Activated naive CD4-positive, alpha-beta T cell treated with anti-CD3 and anti-CD28 coated beads for 36 hours (primary cell): ENCODE measurements at regions of chr2 and their contacts with region 1.

Region 1: GRCh38 chr2:161077367-161078210 is 82.6 kb upstream of the TANK start:
- DNase-seq: peak; percentile 91
- H3K4me3 Mint-ChIP-seq: peak overlapping the region; percentile 34
- H3K27ac Mint-ChIP-seq: peak overlapping the region; percentile 92
- H3K4me1 Mint-ChIP-seq: peaks cover 41% of the 10 kb centered on the region
- H3K27me3 Mint-ChIP-seq: no peaks in the 10 kb centered on the region

Region 2: DNA sequence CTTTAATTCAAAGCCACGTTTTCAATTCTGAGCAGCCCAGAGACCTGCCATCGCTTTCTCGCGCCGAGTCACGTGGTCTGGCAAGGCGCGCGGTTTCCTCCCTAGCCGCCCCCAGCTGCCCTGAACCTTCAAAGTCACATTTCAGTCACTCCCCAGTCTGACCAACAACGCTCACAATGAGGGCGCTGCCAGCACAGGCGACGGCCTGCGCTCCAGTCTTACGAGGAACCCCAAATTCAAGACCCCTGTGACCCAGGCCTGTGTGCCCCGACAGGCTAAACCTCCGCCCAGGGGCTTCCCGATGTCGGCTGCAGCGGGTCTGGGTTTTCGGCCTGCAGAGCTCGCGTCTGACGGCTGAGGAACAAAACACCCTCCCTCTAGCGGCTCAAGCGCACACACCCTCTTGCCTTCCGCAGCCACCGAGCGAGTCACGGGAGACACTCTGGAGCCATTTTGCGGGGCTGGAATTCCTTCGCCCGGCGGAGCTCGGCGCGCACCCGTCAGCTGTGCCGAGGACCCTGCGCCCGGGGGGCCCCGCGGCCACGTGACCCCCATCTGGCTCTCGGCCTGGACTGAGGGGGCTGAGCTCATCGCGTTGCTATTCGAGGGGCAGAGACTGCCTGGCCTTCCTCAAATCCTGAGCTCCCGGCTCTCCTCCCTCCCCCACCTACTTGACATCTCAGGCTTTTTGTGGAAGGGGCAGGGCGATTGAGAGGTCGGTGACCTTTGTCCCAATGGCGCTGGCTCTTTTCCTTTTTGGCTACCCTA is 807.6 kb before region 1 on chr2:
- CTCF ChIA-PET with region 1: no interaction called
- intact Hi-C with region 1: loop called (anchors 1 kb)
- DNase-seq: peak; percentile 64
- H3K4me3 Mint-ChIP-seq: peak overlapping the region; percentile 65
- H3K27ac Mint-ChIP-seq: peak overlapping the region; percentile 53
- H3K4me1 Mint-ChIP-seq: peaks cover 39% of the 10 kb centered on the region
- H3K27me3 Mint-ChIP-seq: no peaks in the 10 kb centered on the region

Region 3: GRCh38 chr2:160493227-160494028 is 584.2 kb before region 1 on chr2 and contains the start of gene RBMS1:
- CTCF ChIA-PET with region 1: no interaction called
- intact Hi-C with region 1: loop called (anchors 1 kb)
- DNase-seq: peak; percentile 58
- H3K4me3 Mint-ChIP-seq: peak within 1 kb of the TSS; percentile 93
- H3K27ac Mint-ChIP-seq: peak within 1 kb of the TSS; percentile 93
- H3K4me1 Mint-ChIP-seq: peaks cover 43% of the 10 kb centered on the region
- H3K27me3 Mint-ChIP-seq: no peaks in the 10 kb centered on the region
- total RNA-seq, gene RBMS1: 27.8 to 29.1 TPM

Region 4: DNA sequence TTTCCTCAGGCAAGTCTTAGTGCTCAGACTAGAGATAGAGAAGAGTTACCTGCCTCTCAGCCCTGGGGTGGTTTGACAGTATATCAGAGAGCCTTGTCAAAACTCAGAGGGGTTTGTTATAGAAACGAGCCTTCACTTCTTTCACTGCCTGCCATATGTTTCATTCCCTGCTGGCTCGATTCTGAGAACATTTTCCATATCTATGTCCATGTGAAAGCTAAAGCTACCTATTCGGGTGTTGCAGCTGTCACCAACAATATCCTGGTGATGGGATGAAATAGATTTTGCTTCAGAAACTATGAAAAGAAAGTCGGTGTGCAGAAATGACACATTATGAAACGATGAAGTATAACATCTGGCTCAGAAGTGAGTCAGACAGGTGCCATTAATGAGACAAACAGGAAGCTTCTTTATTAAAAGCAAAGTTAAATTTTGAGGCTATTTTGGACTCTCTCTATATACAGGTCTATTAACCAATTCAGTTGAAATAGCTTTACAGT is 26.5 kb after region 1 on chr2:
- CTCF ChIA-PET with region 1: no interaction called
- intact Hi-C with region 1: loop called (anchors 1 kb)
- DNase-seq: peak; percentile 35
- H3K4me3 Mint-ChIP-seq: no peak overlapping the region
- H3K27ac Mint-ChIP-seq: peak overlapping the region; percentile 54
- H3K4me1 Mint-ChIP-seq: peaks cover 34% of the 10 kb centered on the region
- H3K27me3 Mint-ChIP-seq: peaks cover 3% of the 10 kb centered on the region

Region 5: GRCh38 chr2:161166538-161167409 is 89.2 kb after region 1 on chr2:
- CTCF ChIA-PET with region 1: no interaction called
- intact Hi-C with region 1: loop called (anchors 1 kb)
- DNase-seq: peak; percentile 88
- H3K4me3 Mint-ChIP-seq: no peak overlapping the region
- H3K27ac Mint-ChIP-seq: peak overlapping the region; percentile 74
- H3K4me1 Mint-ChIP-seq: peaks cover 88% of the 10 kb centered on the region
- H3K27me3 Mint-ChIP-seq: no peaks in the 10 kb centered on the region

Region 6: GRCh38 chr2:161631855-161632391 is 554.3 kb after region 1 on chr2:
- CTCF ChIA-PET with region 1: no interaction called
- intact Hi-C with region 1: no loop called
- DNase-seq: no peak
- H3K4me3 Mint-ChIP-seq: no peak overlapping the region
- H3K27ac Mint-ChIP-seq: no peak overlapping the region
- H3K4me1 Mint-ChIP-seq: no peaks in the 10 kb centered on the region
- H3K27me3 Mint-ChIP-seq: peaks cover 2% of the 10 kb centered on the region

Region 7: DNA sequence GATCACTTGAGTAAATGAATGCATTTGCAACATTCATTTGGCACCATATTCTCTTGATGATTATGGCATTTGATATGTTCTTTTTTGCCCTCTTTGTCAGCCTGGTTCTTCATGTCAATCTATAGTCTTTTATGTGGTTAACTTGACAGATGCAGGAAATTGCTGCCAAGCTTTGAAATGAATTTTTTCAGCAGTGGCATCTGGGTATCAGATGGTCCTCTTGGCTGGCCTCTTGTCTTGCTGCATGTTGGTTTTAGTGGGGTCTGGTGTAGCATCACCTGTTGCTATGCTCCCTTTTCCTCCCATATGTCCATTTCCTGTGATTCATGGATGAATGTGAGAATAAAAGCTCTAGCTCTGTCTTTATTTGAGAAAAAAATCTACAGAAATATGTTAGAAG is 876.5 kb after region 1 on chr2:
- CTCF ChIA-PET with region 1: no interaction called
- intact Hi-C with region 1: loop called (anchors 1 kb)
- DNase-seq: peak; percentile 18
- H3K4me3 Mint-ChIP-seq: no peak overlapping the region
- H3K27ac Mint-ChIP-seq: peak overlapping the region; percentile 88
- H3K4me1 Mint-ChIP-seq: peaks cover 53% of the 10 kb centered on the region
- H3K27me3 Mint-ChIP-seq: no peaks in the 10 kb centered on the region